Activated CD8-positive, alpha-beta T cell treated with anti-CD3 and anti-CD28 coated beads for 36 hours (primary cell): ENCODE measurements at regions of chr5 and their contacts with region 1.

Region 1: GRCh38 chr5:136199408-136199807 is 6.4 kb upstream of the SMIM32 start:
- DNase-seq: no peak
- ATAC-seq: no peak
- H3K4me3 Mint-ChIP-seq: no peak overlapping the region
- H3K27ac Mint-ChIP-seq: no peak overlapping the region
- H3K4me1 Mint-ChIP-seq: no peaks in the 10 kb centered on the region
- H3K27me3 Mint-ChIP-seq: peaks cover 28% of the 10 kb centered on the region
- CTCF ChIP-seq: no peak

Region 2: GRCh38 chr5:136212252-136212721 is 12.9 kb after region 1 on chr5:
- CTCF ChIA-PET with region 1: interaction called, 10 read pairs
- POLR2A ChIA-PET with region 1: no interaction called
- intact Hi-C with region 1: no loop called
- DNase-seq: peak; percentile 62
- ATAC-seq: no peak
- H3K4me3 Mint-ChIP-seq: no peak overlapping the region
- H3K27ac Mint-ChIP-seq: no peak overlapping the region
- H3K4me1 Mint-ChIP-seq: no peaks in the 10 kb centered on the region
- H3K27me3 Mint-ChIP-seq: peaks cover 17% of the 10 kb centered on the region
- CTCF ChIP-seq: peak; percentile 80